Posterior cingulate gyrus (tissue), 11 donors: ENCODE measurements at regions of chr4 and their contacts with region 1.

Region 1: GRCh38 chr4:145107126-145107525 is 9.0 kb downstream of the ABCE1 start:
- DNase-seq: no peak

Region 2: GRCh38 chr4:145168581-145169187 is 61.6 kb after region 1 on chr4:
- intact Hi-C with region 1: loop called (anchors 5 kb)
- DNase-seq: no peak

Region 3: GRCh38 chr4:145352438-145353145 is 245.5 kb after region 1 on chr4:
- intact Hi-C with region 1: no loop called
- DNase-seq: peak in 5 of 10 donors; percentile 32 to 76 (median 70)